Mucosa of descending colon (tissue), 3 donors: ENCODE measurements at regions of chr16 and their contacts with region 1.

Region 1: GRCh38 chr16:13453938-13454553 is 465.9 kb upstream of the ERCC4 start:
- DNase-seq: peak in 1 of 3 donors; percentile 62
- ATAC-seq: no peak
- H3K4me3 ChIP-seq: no peak overlapping the region
- H3K4me1 ChIP-seq: no peaks in the 10 kb centered on the region
- CTCF ChIP-seq: no peak

Region 2: GRCh38 chr16:12896562-12896961 is 557.5 kb before region 1 on chr16:
- intact Hi-C with region 1: loop called in 1 of 2 experiments (anchors 10 kb)
- DNase-seq: no peak
- ATAC-seq: no peak
- H3K4me3 ChIP-seq: no peak overlapping the region
- H3K4me1 ChIP-seq: no peaks in the 10 kb centered on the region
- CTCF ChIP-seq: no peak